ENCODE measurements at regions of chr15 and their contacts with region 1.

Region 1: DNA sequence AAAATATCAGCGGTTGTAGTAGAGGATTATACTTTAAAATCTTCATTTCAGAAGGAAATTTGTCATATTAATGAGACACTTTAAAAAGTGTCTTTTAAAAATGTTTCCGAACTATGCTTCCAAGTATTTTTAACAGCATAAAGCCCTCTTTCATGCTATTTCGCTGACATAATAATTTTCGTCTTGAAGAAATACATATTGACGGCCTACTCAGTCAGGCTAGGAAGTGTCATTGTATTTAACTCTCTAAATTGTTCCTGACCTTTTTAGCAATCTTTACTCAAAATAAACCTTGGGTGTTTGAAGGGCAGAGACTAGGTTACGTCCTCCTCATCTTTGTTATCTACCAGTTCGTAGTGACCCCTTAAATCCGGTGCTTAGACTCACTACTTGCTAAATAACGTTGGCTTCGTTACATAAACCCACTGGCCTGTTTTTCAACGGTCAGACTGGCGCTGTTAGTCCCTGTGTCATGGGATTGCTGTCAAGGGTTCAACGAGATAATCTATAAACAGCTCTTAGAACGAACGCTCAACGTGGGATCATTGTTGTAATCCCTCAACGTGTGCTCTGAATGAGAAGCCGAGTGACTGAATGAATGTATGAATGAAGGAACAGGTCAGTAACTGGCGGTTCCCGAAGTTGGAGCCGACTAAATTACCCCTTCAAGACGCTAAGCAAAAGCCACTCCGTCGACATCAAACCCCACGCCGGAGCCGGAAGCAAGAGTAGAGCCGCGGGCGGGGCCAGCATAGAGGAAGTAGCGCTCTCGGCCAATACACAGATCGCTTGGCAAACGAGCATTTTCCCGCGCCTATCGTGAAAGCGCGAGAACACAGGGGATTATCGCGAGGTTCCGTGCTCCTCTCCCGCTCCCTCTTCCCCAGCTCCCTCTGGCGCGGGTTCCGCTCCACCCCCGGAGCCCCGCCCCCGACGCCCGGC is 516 bp upstream of the LRRC28 start:
- DNase-seq: peak; percentile 99
- H3K4me3 Mint-ChIP-seq: peak overlapping the region; percentile 93
- H3K27ac Mint-ChIP-seq: peak overlapping the region; percentile 87
- H3K4me1 Mint-ChIP-seq: peaks cover 28% of the 10 kb centered on the region
- H3K27me3 Mint-ChIP-seq: no peaks in the 10 kb centered on the region

Region 2: DNA sequence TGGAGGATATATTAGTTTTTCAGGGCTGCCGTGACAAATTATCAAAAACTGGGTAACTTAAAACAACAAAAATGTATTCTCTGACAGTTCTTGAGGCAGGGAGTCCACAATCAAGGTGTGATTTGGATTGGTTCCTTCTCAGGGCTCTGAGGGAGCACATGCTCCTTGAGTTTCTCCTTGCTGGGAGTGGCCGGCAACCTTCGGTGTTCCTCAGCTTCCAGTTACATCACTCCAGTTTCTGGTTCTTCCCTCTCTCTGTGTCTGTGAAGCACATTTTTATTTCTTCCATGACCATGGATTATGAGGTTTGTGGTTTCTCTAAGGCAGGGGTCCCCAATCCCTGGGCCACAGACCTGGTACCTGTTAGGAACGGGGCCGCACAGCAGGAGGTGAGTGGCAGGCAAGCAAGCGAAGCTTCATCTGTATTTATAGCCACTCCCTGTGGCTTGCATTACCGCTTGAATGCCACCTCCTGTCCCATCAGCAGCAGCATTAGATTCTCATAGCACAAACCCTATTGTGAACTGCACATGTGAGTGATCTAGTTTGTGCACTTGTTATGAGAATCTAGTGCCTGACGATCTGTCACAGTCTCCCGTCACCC is 24.9 kb after region 1 on chr15:
- CTCF ChIA-PET with region 1: interaction called, 14 read pairs
- intact Hi-C with region 1: loop called (anchors 1 kb)
- DNase-seq: no peak
- H3K4me3 Mint-ChIP-seq: no peak overlapping the region
- H3K27ac Mint-ChIP-seq: no peak overlapping the region
- H3K4me1 Mint-ChIP-seq: peaks cover 27% of the 10 kb centered on the region
- H3K27me3 Mint-ChIP-seq: no peaks in the 10 kb centered on the region

Region 3: DNA sequence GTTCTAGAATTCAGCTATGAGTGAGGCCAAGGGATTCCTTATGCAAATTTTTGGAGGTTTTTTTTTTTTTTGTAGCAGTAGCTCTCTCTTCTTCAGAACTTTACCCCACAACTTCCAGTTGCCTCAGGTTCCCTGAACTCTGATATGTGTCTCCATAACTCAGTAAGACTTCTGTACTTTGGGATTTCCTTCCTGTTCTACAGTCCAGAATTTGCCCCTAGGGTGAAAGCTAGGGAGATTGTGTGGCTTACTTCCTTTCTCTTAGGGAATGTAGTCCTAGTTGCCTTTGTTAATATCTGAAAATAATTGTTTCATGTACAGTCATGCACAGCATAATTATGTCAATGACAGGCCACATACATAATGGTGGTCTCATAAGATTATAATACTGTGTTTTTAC is 31.4 kb after region 1 on chr15:
- CTCF ChIA-PET with region 1: no interaction called
- intact Hi-C with region 1: loop called (anchors 1 kb)
- DNase-seq: no peak
- H3K4me3 Mint-ChIP-seq: no peak overlapping the region
- H3K27ac Mint-ChIP-seq: no peak overlapping the region
- H3K4me1 Mint-ChIP-seq: peaks cover 43% of the 10 kb centered on the region
- H3K27me3 Mint-ChIP-seq: no peaks in the 10 kb centered on the region

Region 4: GRCh38 chr15:99296386-99296785 is 45.6 kb after region 1 on chr15:
- CTCF ChIA-PET with region 1: no interaction called
- intact Hi-C with region 1: no loop called
- DNase-seq: no peak
- H3K4me3 Mint-ChIP-seq: no peak overlapping the region
- H3K27ac Mint-ChIP-seq: no peak overlapping the region
- H3K4me1 Mint-ChIP-seq: no peaks in the 10 kb centered on the region
- H3K27me3 Mint-ChIP-seq: no peaks in the 10 kb centered on the region

Region 5: DNA sequence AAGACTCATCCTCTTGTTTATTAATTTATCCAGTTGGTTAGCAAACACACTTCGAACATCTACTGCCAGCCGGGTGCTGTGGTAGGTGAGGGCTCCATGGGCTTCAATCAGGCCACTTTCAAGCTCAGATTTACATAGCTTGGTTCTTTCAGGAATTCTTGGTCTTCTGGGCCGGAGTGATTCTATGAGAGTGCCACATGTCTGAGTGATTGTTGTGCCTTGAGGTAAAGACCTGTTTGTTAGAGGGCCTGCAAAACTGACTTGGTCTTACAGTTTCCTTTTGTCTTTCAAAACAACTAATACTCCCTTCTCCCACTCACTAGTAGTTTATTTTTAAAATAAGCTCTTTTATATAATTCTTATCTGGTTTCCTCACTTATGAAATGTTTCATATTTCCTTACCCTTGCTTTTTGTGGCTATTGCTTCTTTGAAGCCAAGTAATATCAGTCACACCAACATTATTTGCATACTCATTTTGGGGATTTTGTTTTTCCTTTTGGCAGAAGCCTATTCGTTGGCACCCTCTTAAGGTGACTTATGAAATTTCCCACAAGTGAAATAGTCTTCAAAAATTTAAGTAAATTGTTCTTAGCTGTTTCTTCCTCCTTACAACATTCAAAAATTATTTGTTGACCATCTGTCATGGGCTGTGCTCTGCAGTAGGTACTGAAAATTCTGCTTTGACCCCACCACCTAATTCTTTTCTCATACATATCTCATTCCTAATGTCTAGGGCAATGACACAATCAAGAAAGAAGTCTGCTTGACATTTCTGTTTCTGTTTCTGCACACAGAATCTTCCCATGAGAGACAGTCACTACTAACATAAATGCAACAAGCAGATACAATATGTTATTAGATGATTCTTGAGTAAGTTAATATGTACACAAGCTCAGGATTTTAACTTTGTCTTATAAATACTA is 120.7 kb after region 1 on chr15:
- CTCF ChIA-PET with region 1: interaction called, 3 read pairs
- intact Hi-C with region 1: loop called (anchors 1 kb)
- DNase-seq: no peak
- H3K4me3 Mint-ChIP-seq: no peak overlapping the region
- H3K27ac Mint-ChIP-seq: peak overlapping the region; percentile 44
- H3K4me1 Mint-ChIP-seq: peaks cover 22% of the 10 kb centered on the region
- H3K27me3 Mint-ChIP-seq: no peaks in the 10 kb centered on the region

Region 6: GRCh38 chr15:99424978-99425656 is 174.4 kb after region 1 on chr15:
- CTCF ChIA-PET with region 1: no interaction called
- intact Hi-C with region 1: loop called (anchors 1 kb)
- DNase-seq: peak; percentile 83
- H3K4me3 Mint-ChIP-seq: no peak overlapping the region
- H3K27ac Mint-ChIP-seq: peak overlapping the region; percentile 53
- H3K4me1 Mint-ChIP-seq: peaks cover 55% of the 10 kb centered on the region
- H3K27me3 Mint-ChIP-seq: no peaks in the 10 kb centered on the region

Region 7: DNA sequence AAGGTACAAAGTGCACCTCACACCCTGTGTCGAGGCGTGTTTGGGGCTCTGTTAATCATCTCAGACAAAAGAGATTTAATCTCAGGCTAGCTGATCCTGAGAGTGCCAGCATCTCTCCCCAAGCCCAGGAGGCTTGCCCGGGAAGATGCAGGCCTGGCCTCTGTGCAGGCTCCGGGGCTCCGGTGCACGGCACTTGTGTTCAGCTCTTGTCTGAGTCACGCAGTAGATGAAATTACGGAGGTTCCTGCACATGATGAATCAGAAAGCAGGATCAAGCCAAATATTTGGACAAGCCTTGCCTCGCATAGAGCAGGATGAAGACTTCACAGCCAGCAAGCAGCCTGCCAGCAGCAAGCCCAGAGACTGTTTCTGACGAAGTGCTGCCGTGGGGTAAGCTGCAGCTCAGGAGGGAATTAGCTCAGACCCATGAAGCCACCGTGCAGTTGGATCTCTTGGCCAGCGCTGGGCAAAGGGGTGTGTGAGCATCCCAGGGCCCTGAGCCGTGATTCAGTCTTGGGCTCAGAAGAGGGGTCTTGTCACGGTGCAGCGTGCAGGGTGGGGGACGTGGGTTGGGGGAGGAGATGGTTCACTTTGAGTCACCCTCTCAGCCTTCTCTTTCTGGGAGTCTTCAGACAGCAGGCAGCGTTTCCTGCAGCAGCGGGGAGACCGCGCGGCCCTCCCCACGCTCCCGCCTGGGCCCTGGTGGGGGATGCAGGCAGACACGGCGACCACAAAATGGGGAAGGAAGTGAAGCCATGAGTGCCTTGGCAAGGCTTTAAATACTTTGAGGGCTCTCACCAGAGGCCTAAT is 225.9 kb after region 1 on chr15:
- CTCF ChIA-PET with region 1: no interaction called
- intact Hi-C with region 1: no loop called
- DNase-seq: peak; percentile 56
- H3K4me3 Mint-ChIP-seq: no peak overlapping the region
- H3K27ac Mint-ChIP-seq: no peak overlapping the region
- H3K4me1 Mint-ChIP-seq: peaks cover 25% of the 10 kb centered on the region
- H3K27me3 Mint-ChIP-seq: no peaks in the 10 kb centered on the region

Region 8: GRCh38 chr15:99733268-99734039 is 482.7 kb after region 1 on chr15 and contains the start of gene LYSMD4:
- CTCF ChIA-PET with region 1: no interaction called
- intact Hi-C with region 1: loop called (anchors 1 kb)
- DNase-seq: peak; percentile 99
- H3K4me3 Mint-ChIP-seq: peak within 1 kb of the TSS; percentile 81
- H3K27ac Mint-ChIP-seq: peak within 1 kb of the TSS; percentile 86
- H3K4me1 Mint-ChIP-seq: peaks cover 22% of the 10 kb centered on the region
- H3K27me3 Mint-ChIP-seq: no peaks in the 10 kb centered on the region
- total RNA-seq, gene LYSMD4: 4.9 TPM